ENCODE measurements at regions of chr4 and their contacts with region 1.

Region 1: GRCh38 chr4:113300471-113300928 is 251.0 kb downstream of the ANK2 start:
- DNase-seq: no peak
- ATAC-seq: no peak
- H3K4me3 ChIP-seq: no peak overlapping the region
- H3K27ac ChIP-seq: no peak overlapping the region
- H3K4me1 ChIP-seq: no peaks in the 10 kb centered on the region
- H3K27me3 ChIP-seq: no peaks in the 10 kb centered on the region
- CTCF ChIP-seq: no peak

Region 2: GRCh38 chr4:113146876-113147358 is 153.6 kb before region 1 on chr4:
- CTCF ChIA-PET with region 1: no interaction called
- POLR2A ChIA-PET with region 1: no interaction called
- in situ Hi-C with region 1: no loop called
- intact Hi-C with region 1: no loop called
- DNase-seq: no peak
- ATAC-seq: peak; percentile 74; the same call in 1 of the 2 replicates
- H3K4me3 ChIP-seq: peak overlapping the region; percentile 9 to 46; a peak in 3 of 4 replicates
- H3K27ac ChIP-seq: peak overlapping the region; percentile 14; the same call in 1 of the 2 replicates
- H3K4me1 ChIP-seq: peaks cover 7% of the 10 kb centered on the region; the same call in 1 of the 2 replicates
- H3K27me3 ChIP-seq: no peaks in the 10 kb centered on the region
- CTCF ChIP-seq: no peak

Region 3: GRCh38 chr4:113289766-113290165 is 10.7 kb before region 1 on chr4:
- CTCF ChIA-PET with region 1: no interaction called
- POLR2A ChIA-PET with region 1: no interaction called
- in situ Hi-C with region 1: no loop called
- intact Hi-C with region 1: no loop called
- DNase-seq: no peak
- ATAC-seq: no peak
- H3K4me3 ChIP-seq: no peak overlapping the region
- H3K27ac ChIP-seq: no peak overlapping the region
- H3K4me1 ChIP-seq: no peaks in the 10 kb centered on the region
- H3K27me3 ChIP-seq: no peaks in the 10 kb centered on the region
- CTCF ChIP-seq: no peak

Region 4: DNA sequence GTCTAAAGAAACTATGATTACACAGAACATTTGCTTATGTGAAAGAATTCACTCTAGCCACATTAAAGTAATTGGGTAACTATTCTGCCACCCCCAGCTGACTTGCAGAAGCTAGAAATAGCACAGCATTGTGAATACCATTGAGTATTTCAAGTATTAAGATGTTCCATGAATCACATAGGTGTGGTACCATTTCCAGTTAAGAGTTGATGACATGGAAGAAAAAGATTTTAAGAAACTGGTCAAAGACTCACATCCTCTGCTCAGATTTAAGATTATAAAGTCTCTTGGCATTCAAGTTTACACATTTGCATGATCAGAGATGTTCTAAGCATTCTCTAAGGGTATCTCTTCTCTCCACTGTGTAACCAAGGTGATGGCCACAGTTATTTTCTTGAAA is 173.5 kb after region 1 on chr4:
- CTCF ChIA-PET with region 1: no interaction called
- POLR2A ChIA-PET with region 1: interaction called, 12 read pairs
- in situ Hi-C with region 1: no loop called
- intact Hi-C with region 1: no loop called
- DNase-seq: no peak
- ATAC-seq: no peak
- H3K4me3 ChIP-seq: no peak overlapping the region
- H3K27ac ChIP-seq: no peak overlapping the region
- H3K4me1 ChIP-seq: peaks cover 6% of the 10 kb centered on the region; the same call in 1 of the 2 replicates
- H3K27me3 ChIP-seq: no peaks in the 10 kb centered on the region
- CTCF ChIP-seq: no peak

Measured in Panc1 (cell line).